Breast epithelium (tissue), 4 donors: ENCODE measurements at regions of chrX and their contacts with region 1.

Region 1: GRCh38 chrX:145936769-145937168 is 119.1 kb downstream of the SLITRK2 start:
- DNase-seq: no peak
- H3K4me3 ChIP-seq: no peak overlapping the region
- H3K27ac ChIP-seq: no peak overlapping the region
- H3K4me1 ChIP-seq: no peaks in the 10 kb centered on the region
- H3K27me3 ChIP-seq: no peaks in the 10 kb centered on the region
- CTCF ChIP-seq: no peak
- POLR2A ChIP-seq: no peak

Region 2: GRCh38 chrX:145881175-145881867 is 55.4 kb before region 1 on chrX:
- intact Hi-C with region 1: loop called (anchors 2 kb)
- DNase-seq: no peak
- H3K4me3 ChIP-seq: no peak overlapping the region
- H3K27ac ChIP-seq: no peak overlapping the region
- H3K4me1 ChIP-seq: no peaks in the 10 kb centered on the region
- H3K27me3 ChIP-seq: no peaks in the 10 kb centered on the region
- CTCF ChIP-seq: no peak
- POLR2A ChIP-seq: no peak

Region 3: DNA sequence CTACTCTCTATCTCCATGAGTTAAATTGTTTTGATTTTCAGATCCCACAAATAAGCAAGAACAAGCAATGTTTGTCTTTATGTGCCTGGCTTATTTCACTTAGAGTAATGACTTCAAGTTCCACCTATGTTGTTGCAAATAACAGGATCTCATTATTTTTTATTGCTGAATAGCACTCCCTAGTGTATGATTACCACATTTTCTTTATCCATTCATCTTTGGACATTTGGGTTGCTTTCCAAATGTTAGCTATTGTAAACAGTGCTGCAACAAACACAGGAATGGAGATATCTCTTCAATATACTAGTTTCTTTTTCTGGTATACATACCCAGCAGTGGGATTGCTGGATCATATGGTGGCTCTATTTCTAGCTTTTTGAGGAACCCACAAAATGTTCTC is 16.9 kb after region 1 on chrX:
- intact Hi-C with region 1: no loop called
- DNase-seq: no peak
- H3K4me3 ChIP-seq: no peak overlapping the region
- H3K27ac ChIP-seq: no peak overlapping the region
- H3K4me1 ChIP-seq: no peaks in the 10 kb centered on the region
- H3K27me3 ChIP-seq: peaks cover 0 to 12% of the 10 kb centered on the region in 2 donors
- CTCF ChIP-seq: no peak
- POLR2A ChIP-seq: no peak